PC-9 (cell line): ENCODE measurements at regions of chr1 and their contacts with region 1.

Region 1: DNA sequence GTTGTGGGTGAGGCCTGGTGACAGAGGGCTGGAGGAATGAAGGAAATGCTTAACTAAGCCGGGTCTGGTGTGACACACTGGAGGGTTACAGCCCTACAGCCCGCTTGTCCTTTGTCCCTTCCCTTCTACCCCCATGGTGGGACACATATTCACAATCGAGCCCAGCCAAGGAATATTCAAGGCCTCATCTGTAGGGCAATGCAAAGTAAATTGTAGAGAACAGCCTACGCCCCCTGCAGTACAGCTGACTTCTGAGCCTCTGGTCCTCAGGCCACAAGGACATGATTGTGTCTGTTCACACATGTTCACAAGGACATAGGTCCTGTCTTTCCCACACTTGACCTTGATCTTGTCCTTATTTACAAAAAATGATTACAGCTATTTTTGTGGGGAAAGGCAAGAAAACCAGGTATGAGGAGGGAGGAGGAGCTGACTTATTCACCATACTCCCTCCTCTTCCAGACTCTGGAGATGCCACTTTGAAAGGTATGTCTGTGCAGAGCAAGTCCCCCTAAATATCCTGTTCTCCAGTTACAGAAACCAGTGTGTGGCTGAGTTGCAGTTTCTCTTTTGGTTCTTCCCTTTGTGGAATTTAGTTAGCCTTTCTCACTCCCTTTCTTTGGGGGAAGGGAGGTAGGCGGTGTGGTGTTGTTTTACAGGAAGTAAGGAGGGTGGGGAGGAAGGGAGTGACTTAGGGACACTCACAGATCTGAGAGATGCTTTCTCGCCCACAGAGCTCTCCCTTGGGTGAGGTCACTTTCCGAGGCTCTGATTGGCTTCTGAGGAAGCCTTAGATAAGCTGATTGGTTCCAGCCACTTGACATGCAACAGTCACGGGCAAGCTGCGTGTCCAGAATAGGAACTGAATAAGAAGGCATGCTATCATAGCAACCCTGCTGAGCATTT is 14.6 kb downstream of the POLR3GL start:
- DNase-seq: peak; percentile 86 to 100
- H3K4me3 ChIP-seq: peak overlapping the region; percentile 55
- H3K27ac ChIP-seq: peak overlapping the region; percentile 100
- H3K4me1 ChIP-seq: peaks cover 49% of the 10 kb centered on the region
- H3K27me3 ChIP-seq: no peaks in the 10 kb centered on the region
- CTCF ChIP-seq: no peak; the same call in 1 of the 2 replicates

Region 2: DNA sequence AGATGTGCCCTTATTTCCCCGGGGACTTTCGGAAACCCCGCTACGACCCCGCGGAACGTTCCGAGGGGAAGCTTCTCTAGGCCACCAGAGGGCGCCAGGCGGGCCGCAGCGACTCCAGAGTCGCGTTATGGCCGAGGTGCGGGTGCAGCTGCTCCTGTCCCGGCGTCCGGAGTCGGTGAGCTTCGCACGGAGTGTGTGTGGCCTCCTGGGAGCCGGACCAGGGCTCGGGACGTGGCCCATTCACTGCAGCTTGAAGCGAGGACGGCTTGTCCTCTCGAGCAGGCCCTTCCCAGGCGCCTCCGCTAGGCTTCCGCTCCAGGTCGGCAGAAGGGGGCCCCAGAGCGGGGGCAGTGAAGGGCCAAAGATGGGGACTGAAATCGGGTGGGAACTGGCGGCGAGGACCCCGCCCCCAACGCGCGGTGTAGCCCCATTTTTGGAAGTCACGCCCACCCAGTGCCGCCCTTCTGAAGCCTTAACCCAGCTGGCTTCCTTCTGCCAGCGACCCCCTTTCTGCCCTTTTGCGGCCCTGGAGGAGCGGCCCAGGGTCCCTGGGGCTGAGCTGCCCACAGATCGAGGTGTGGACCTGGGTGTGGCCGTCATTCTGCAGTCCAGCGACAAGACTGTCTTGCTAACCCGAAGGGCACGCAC is 133.5 kb before region 1 on chr1 and contains the start of gene NUDT17:
- CTCF ChIA-PET with region 1: interaction called, 4 read pairs
- POLR2A ChIA-PET with region 1: no interaction called
- intact Hi-C with region 1: loop called (anchors 2 kb)
- DNase-seq: peak; percentile 48 to 67
- H3K4me3 ChIP-seq: peak within 1 kb of the TSS; percentile 63
- H3K27ac ChIP-seq: no peak within 1 kb of the TSS
- H3K4me1 ChIP-seq: peaks cover 3% of the 10 kb centered on the region; the same call in 1 of the 2 replicates
- H3K27me3 ChIP-seq: no peaks in the 10 kb centered on the region
- CTCF ChIP-seq: peak; percentile 92
- total RNA-seq, gene NUDT17: 1.0 and 1.5 TPM in 2 replicates

Region 3: DNA sequence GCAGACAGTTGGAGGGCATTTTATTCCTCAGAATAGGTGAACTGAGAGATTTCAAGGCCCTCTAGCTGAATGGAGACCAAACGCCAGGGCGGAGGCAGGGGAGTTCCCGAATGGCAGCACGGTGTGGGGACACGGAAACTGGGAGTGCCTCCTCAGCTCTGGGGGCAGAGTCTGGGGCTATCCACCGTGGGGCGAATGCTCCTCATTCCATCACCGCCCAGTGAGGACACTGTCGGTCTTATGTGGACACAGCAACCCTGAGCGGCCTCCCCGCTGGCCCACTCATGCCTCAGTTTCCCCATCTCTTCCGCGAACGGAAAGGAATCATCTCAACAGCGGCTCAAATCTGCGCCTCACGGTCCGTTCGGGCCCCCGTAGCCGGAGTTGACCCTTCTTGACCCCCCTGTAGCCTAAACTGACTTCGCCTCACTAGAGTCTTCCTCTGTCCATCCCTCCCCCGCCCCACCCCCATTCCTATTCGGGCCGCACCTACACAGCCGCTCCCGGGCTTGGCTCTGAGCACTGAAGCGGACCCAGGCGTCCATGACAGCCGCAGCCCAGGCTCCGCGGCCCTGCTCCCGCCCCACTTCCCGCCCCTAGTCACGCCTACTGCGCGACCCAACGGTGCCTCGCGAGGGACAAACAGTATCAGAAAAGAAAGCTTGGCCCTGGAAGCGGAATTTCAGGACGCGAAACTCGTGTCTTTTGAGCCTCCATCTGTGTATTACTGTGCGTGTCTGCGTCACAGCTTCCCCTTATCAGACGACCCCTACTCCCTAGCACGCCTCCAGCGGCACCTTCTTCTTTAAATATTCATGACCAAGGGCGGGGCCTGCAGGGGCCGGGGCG is 60.7 kb before region 1 on chr1 and contains the start of gene PEX11B:
- CTCF ChIA-PET with region 1: no interaction called
- POLR2A ChIA-PET with region 1: no interaction called
- intact Hi-C with region 1: loop called (anchors 5 kb)
- DNase-seq: peak; percentile 66 to 83
- H3K4me3 ChIP-seq: peak within 1 kb of the TSS; percentile 80
- H3K27ac ChIP-seq: peak within 1 kb of the TSS; percentile 64
- H3K4me1 ChIP-seq: peaks cover 11% of the 10 kb centered on the region
- H3K27me3 ChIP-seq: no peaks in the 10 kb centered on the region
- CTCF ChIP-seq: no peak
- total RNA-seq, gene PEX11B: 19.7 and 19.8 TPM in 2 replicates

Region 4: GRCh38 chr1:145936247-145936646 is 42.9 kb before region 1 on chr1:
- CTCF ChIA-PET with region 1: no interaction called
- POLR2A ChIA-PET with region 1: no interaction called
- intact Hi-C with region 1: no loop called
- DNase-seq: no peak
- H3K4me3 ChIP-seq: no peak overlapping the region
- H3K27ac ChIP-seq: no peak overlapping the region
- H3K4me1 ChIP-seq: no peaks in the 10 kb centered on the region
- H3K27me3 ChIP-seq: no peaks in the 10 kb centered on the region
- CTCF ChIP-seq: no peak

Region 5: DNA sequence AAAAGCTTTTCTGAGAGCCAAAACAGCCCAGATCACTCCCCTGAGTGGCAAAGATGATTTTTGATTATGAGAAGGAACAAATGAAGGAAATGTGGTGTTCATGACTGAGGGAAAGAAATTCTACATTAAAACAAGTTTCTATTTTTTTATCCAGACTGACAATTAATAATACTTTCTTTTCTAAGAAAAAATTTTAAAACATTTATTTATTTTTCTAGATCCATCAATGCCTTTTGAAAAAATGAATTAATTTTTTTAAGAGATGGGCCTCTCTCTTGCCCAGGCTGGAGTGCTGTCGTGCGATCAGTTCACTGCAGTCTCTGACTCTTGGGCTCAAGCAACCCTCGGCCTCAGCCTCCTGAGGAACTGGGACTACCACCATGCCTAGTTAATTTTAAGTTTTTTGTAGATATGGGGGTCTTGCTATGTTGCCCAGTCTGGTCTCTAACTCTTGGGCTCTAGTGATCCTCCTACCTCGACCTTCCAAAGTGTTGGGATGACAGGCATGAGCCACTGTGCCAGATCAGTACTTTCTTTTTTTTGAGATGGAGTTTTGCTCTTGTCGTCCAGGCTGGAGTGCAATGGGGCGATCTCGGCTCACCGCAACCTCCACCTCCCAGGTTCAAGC is 28.5 kb after region 1 on chr1:
- CTCF ChIA-PET with region 1: interaction called, 24 read pairs
- POLR2A ChIA-PET with region 1: interaction called, 20 read pairs
- intact Hi-C with region 1: loop called (anchors 2 kb)
- DNase-seq: no peak
- H3K4me3 ChIP-seq: no peak overlapping the region
- H3K27ac ChIP-seq: no peak overlapping the region
- H3K4me1 ChIP-seq: peaks cover 3% of the 10 kb centered on the region; the same call in 1 of the 2 replicates
- H3K27me3 ChIP-seq: no peaks in the 10 kb centered on the region
- CTCF ChIP-seq: peak; percentile 37; the same call in 1 of the 2 replicates

Region 6: GRCh38 chr1:146036965-146037646 is 58.0 kb after region 1 on chr1:
- CTCF ChIA-PET with region 1: interaction called, 6 read pairs
- POLR2A ChIA-PET with region 1: interaction called, 7 read pairs
- intact Hi-C with region 1: loop called (anchors 2 kb)
- DNase-seq: peak; percentile 81
- H3K4me3 ChIP-seq: peak overlapping the region; percentile 74
- H3K27ac ChIP-seq: peak overlapping the region; percentile 88
- H3K4me1 ChIP-seq: no peaks in the 10 kb centered on the region
- H3K27me3 ChIP-seq: no peaks in the 10 kb centered on the region
- CTCF ChIP-seq: no peak

Region 7: GRCh38 chr1:147723691-147724323 is 1744.7 kb after region 1 on chr1:
- CTCF ChIA-PET with region 1: no interaction called
- POLR2A ChIA-PET with region 1: no interaction called
- intact Hi-C with region 1: no loop called
- DNase-seq: peak in 1 of 2 experiments; percentile 46
- H3K4me3 ChIP-seq: no peak overlapping the region
- H3K27ac ChIP-seq: no peak overlapping the region
- H3K4me1 ChIP-seq: peaks cover 58% of the 10 kb centered on the region
- H3K27me3 ChIP-seq: no peaks in the 10 kb centered on the region
- CTCF ChIP-seq: peak; percentile 51